Psoas muscle (tissue), 8 donors: ENCODE measurements at regions of chr1 and their contacts with region 1.

Region 1: GRCh38 chr1:150925816-150926741 is at the start of gene SETDB1:
- DNase-seq: peak; percentile 95 to 98
- ATAC-seq: peak; percentile 97 to 99 (median 98)
- H3K4me3 ChIP-seq: peak within 1 kb of the TSS; percentile 75
- H3K27ac ChIP-seq: peak within 1 kb of the TSS; percentile 85
- H3K4me1 ChIP-seq: peaks cover 22% of the 10 kb centered on the region
- H3K27me3 ChIP-seq: no peaks in the 10 kb centered on the region
- CTCF ChIP-seq: no peak
- total RNA-seq, gene SETDB1: 19.4 to 27.1 (median 20.4) TPM

Region 2: GRCh38 chr1:150846473-150847146 is 79.5 kb before region 1 on chr1:
- intact Hi-C with region 1: loop called in 1 of 2 experiments (anchors 5 kb)
- DNase-seq: no peak
- ATAC-seq: peak in 1 of 4 donors; percentile 42
- H3K4me3 ChIP-seq: no peak overlapping the region
- H3K27ac ChIP-seq: no peak overlapping the region
- H3K4me1 ChIP-seq: peaks cover 15% of the 10 kb centered on the region
- H3K27me3 ChIP-seq: no peaks in the 10 kb centered on the region
- CTCF ChIP-seq: no peak

Region 3: GRCh38 chr1:150876119-150876454 is 50.0 kb before region 1 on chr1:
- intact Hi-C with region 1: loop called (anchors 5 kb)
- DNase-seq: no peak
- ATAC-seq: peak; percentile 61 to 73 (median 68)
- H3K4me3 ChIP-seq: peak overlapping the region; percentile 86
- H3K27ac ChIP-seq: peak overlapping the region; percentile 94
- H3K4me1 ChIP-seq: peaks cover 12% of the 10 kb centered on the region
- H3K27me3 ChIP-seq: no peaks in the 10 kb centered on the region
- CTCF ChIP-seq: no peak

Region 4: GRCh38 chr1:150881331-150882070 is 44.6 kb before region 1 on chr1:
- intact Hi-C with region 1: loop called (anchors 5 kb)
- DNase-seq: no peak
- ATAC-seq: peak in 3 of 4 donors; percentile 37 to 65 (median 43)
- H3K4me3 ChIP-seq: no peak overlapping the region
- H3K27ac ChIP-seq: no peak overlapping the region
- H3K4me1 ChIP-seq: no peaks in the 10 kb centered on the region
- H3K27me3 ChIP-seq: no peaks in the 10 kb centered on the region
- CTCF ChIP-seq: no peak

Region 5: DNA sequence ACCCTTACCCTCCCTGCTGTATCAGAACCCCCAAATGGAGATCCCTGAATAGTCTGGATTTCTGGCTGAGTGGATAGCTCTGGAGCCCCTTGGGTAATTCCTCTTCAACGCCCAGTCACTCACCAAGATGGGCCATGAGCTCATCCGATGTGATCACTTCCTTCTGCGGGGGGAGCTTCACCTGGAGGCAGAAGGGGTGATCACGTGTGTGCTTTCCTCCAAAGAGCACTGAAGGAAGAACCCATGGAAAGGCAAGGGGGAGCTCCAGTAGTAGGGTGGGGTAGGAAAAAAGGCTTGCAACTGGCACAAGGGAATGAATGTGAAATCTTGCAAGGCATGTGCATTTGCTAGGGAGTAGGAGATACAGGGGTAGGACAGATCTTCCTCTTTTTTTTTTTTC is 75.5 kb after region 1 on chr1:
- intact Hi-C with region 1: loop called in 1 of 2 experiments (anchors 5 kb)
- DNase-seq: no peak
- ATAC-seq: no peak
- H3K4me3 ChIP-seq: no peak overlapping the region
- H3K27ac ChIP-seq: no peak overlapping the region
- H3K4me1 ChIP-seq: peaks cover 29% of the 10 kb centered on the region
- H3K27me3 ChIP-seq: no peaks in the 10 kb centered on the region
- CTCF ChIP-seq: no peak